ENCODE measurements at regions of chr17 and their contacts with region 1.

Region 1: DNA sequence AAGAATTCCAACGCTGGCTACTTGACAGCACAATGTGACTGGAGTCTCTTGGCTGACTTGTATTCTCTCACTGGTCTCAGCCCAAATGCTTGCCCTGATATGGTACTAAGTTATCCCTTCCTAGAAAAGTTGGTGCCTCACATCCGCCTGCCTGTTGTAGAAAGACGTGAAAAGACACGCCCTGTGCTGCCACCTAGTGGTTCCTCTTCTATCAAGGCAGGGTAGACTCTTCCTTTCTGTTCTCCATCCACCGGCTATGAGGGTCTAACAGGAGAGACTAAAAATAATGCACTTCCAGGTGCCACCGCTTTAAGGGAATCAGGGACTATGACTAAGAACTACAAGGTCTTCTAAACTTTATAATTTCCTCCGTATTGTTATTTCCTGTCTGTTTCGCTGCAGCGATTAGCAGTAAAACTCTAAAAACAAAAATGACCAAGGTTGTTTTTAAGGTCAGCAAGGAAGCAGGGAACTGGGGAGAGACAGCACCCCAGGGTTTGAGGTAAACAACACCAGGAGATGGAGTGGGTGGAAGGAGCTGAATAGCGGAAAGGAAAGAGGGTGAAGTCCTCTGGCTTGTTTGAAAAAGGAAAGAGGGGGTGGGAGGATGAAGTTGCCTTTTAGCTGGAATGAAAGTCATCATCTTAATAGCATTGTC is 109.5 kb downstream of the YPEL2 start:
- DNase-seq: peak; percentile 88 to 89
- ATAC-seq: peak; percentile 99 to 100
- H3K4me3 ChIP-seq: no peak overlapping the region
- H3K27ac ChIP-seq: no peak overlapping the region; a peak in 1 of 6 replicates
- H3K4me1 ChIP-seq: no peaks in the 10 kb centered on the region; the same call in 2 of the 3 replicates
- CTCF ChIP-seq: peak; percentile 96
- EP300 ChIP-seq: no peak
- POLR2A ChIP-seq: no peak
- RAD21 ChIP-seq: peak; percentile 93 to 95

Region 2: DNA sequence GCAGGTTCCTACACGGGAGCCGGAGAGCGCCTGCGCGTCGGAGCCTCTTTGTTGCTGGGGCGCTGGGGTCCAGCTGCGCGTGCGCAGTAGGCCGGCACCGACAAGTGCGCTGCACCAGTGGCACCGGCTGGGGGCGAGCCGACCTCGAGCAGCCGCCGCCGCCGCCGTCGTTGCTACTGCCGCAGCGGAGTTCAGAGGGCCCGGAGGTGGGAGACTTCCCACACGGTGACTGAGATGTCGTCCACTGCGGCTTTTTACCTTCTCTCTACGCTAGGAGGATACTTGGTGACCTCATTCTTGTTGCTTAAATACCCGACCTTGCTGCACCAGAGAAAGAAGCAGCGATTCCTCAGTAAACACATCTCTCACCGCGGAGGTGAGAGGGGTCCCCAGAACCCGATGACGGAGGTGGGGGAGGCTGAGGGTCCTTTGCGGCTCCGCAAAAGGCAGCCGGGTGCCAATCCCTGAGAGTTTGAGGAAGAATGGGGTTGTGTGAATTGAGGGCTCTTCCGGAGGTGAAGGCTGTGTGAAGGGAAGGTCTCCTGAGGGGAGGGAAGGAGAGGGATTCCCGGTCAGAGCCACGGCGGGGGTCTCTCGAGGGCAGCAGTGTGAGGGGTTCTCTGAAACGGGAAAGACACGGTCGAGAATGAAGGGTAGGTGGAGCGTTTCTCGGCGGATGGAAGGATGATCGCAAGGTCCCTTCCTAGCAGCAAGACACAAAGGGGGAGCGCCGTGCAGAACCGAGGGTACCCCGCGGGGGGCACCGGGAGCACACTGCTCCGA is 220.3 kb before region 1 on chr17 and contains the start of gene GDPD1:
- CTCF ChIA-PET with region 1: interaction called, 13 read pairs
- POLR2A ChIA-PET with region 1: interaction called, 4 read pairs
- DNase-seq: peak; percentile 94 to 96
- ATAC-seq: peak; percentile 98 to 99
- H3K4me3 ChIP-seq: peak within 1 kb of the TSS; percentile 76
- H3K27ac ChIP-seq: peak within 1 kb of the TSS; percentile 77 to 85
- H3K4me1 ChIP-seq: peaks cover 17% of the 10 kb centered on the region
- CTCF ChIP-seq: peak; percentile 71
- EP300 ChIP-seq: no peak
- POLR2A ChIP-seq: peak; percentile 74
- RAD21 ChIP-seq: peak; percentile 71 to 83
- polyA plus RNA-seq, gene GDPD1: 6.4 and 6.7 TPM in 2 replicates

Region 3: GRCh38 chr17:59331129-59331928 is 109.6 kb before region 1 on chr17 and contains the start of gene YPEL2:
- CTCF ChIA-PET with region 1: interaction called, 168 read pairs
- POLR2A ChIA-PET with region 1: interaction called, 3 read pairs
- DNase-seq: peak; percentile 95 to 98
- ATAC-seq: peak; percentile 85 to 97
- H3K4me3 ChIP-seq: peak within 1 kb of the TSS; percentile 99
- H3K27ac ChIP-seq: peak within 1 kb of the TSS; percentile 75 to 87
- H3K4me1 ChIP-seq: peaks cover 40% of the 10 kb centered on the region
- CTCF ChIP-seq: no peak; the same call in 2 of the 3 replicates
- EP300 ChIP-seq: no peak
- POLR2A ChIP-seq: peak; percentile 45; the same call in 1 of the 2 replicates
- RAD21 ChIP-seq: no peak
- polyA plus RNA-seq, gene YPEL2: 8.2 and 9.6 TPM in 2 replicates

Region 4: DNA sequence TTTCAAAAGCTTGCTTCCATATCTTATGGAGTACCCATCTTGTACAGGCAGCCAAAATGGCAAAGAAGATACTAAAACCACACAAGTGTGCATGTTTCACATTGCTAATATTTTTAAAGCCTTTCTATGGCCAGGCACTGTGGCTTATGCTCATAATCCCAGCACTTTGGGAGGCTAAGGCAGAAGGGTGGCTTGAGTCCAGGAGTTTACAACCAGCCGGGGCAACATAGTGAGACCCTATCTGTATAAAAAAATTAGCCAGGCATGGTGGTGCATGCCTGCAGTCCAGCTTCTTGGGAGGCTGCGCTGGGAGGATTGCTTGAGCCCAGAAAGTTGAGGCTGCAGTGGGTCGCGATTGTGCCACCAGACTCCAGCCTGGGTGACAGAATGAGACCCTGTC is 38.2 kb before region 1 on chr17:
- CTCF ChIA-PET with region 1: interaction called, 13 read pairs
- POLR2A ChIA-PET with region 1: no interaction called
- DNase-seq: no peak
- ATAC-seq: no peak
- H3K4me3 ChIP-seq: no peak overlapping the region
- H3K27ac ChIP-seq: no peak overlapping the region
- H3K4me1 ChIP-seq: peaks cover 32% of the 10 kb centered on the region
- CTCF ChIP-seq: no peak
- EP300 ChIP-seq: no peak
- POLR2A ChIP-seq: no peak
- RAD21 ChIP-seq: no peak

Region 5: DNA sequence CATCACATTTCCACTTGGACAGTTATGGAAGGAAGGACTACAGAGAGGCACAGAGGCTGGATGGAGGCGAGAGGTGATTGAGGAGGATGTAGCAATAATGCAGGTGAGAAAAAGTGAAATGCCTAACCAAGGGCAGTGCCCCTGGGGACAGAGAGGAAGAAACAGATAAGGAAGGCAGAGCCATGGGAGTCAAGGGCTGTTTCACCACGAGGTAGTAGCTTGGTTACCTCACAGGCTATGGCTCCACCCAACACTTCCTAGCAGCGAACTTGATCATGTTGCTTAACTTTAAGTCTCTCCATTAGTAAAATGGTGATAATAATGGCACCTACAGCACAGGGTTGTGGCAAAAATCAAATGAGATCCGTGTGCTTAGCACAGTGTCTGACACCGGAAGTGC is 25.5 kb before region 1 on chr17:
- CTCF ChIA-PET with region 1: interaction called, 13 read pairs
- POLR2A ChIA-PET with region 1: no interaction called
- DNase-seq: no peak
- ATAC-seq: peak; percentile 31 to 45; a peak in 4 of 6 replicates
- H3K4me3 ChIP-seq: no peak overlapping the region
- H3K27ac ChIP-seq: no peak overlapping the region
- H3K4me1 ChIP-seq: no peaks in the 10 kb centered on the region
- CTCF ChIP-seq: no peak
- EP300 ChIP-seq: no peak
- POLR2A ChIP-seq: no peak
- RAD21 ChIP-seq: no peak

Region 6: DNA sequence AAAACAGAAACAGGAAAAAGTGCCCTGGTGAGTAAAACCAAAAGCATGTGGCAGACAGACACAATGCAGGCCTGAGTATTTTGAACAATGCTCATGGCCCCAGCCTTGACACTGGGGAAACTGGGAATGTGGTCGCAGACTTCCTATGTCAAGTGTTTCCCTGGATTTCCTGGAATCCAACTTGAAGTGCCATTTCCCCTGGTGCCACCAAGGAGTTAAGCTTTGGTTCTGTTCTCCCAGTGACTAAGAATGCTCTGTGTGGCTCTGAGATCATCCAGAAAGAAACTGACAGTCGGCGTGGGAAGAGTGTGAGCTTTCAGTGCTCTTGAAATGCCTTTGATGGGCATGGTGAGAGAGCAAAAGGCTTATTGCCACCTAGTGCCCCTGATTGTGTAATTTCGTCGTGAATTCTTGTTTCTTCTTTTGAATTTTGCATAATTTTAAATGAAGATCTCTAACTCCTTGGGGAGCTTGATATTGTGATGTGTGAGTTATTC is 13.4 kb before region 1 on chr17:
- CTCF ChIA-PET with region 1: interaction called, 171 read pairs
- POLR2A ChIA-PET with region 1: no interaction called
- DNase-seq: peak in 1 of 2 experiments; percentile 20
- ATAC-seq: no peak
- H3K4me3 ChIP-seq: no peak overlapping the region
- H3K27ac ChIP-seq: peak overlapping the region in 1 of 2 experiments; percentile 23; a peak in 1 of 6 replicates
- H3K4me1 ChIP-seq: peaks cover 11% of the 10 kb centered on the region
- CTCF ChIP-seq: no peak
- EP300 ChIP-seq: no peak
- POLR2A ChIP-seq: no peak
- RAD21 ChIP-seq: no peak

Region 7: GRCh38 chr17:59451706-59452105 is 10.8 kb after region 1 on chr17:
- CTCF ChIA-PET with region 1: interaction called, 90 read pairs
- POLR2A ChIA-PET with region 1: no interaction called
- DNase-seq: peak in 1 of 2 experiments; percentile 34
- ATAC-seq: peak in 1 of 2 experiments; percentile 57; a peak in 4 of 6 replicates
- H3K4me3 ChIP-seq: no peak overlapping the region
- H3K27ac ChIP-seq: no peak overlapping the region
- H3K4me1 ChIP-seq: no peaks in the 10 kb centered on the region
- CTCF ChIP-seq: no peak
- EP300 ChIP-seq: no peak
- POLR2A ChIP-seq: no peak
- RAD21 ChIP-seq: no peak

Measured in A549 (cell line).